Prostate gland (tissue), 2 donors: ENCODE measurements at regions of chr1 and their contacts with region 1.

Region 1: DNA sequence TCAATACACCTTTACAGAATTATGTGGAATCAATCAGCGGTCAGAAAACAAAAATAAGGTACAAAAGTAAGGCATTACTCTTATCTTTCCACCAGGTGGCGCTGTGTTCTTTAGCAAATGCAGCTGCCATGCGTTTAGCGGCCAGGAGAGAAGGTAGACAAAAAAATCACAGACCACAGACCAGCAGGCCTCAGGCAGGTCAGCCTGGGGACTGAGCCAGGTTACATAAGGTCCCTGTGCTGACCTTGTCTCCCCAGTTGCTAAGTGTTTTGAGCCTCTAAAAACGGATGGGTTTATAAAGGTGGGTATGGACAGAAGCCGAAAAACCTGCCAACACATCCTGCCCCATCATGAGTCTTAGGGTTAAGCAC is 2.8 kb downstream of the RGS16 start:
- DNase-seq: peak; percentile 63
- H3K4me3 ChIP-seq: no peak overlapping the region
- H3K27ac ChIP-seq: no peak overlapping the region
- H3K4me1 ChIP-seq: no peaks in the 10 kb centered on the region
- H3K27me3 ChIP-seq: no peaks in the 10 kb centered on the region
- CTCF ChIP-seq: peak; percentile 93 to 99 (median 94)
- POLR2A ChIP-seq: no peak

Region 2: GRCh38 chr1:182783068-182783467 is 181.7 kb after region 1 on chr1:
- intact Hi-C with region 1: loop called (anchors 1 kb)
- DNase-seq: no peak
- H3K4me3 ChIP-seq: no peak overlapping the region
- H3K27ac ChIP-seq: no peak overlapping the region
- H3K4me1 ChIP-seq: no peaks in the 10 kb centered on the region
- H3K27me3 ChIP-seq: no peaks in the 10 kb centered on the region
- CTCF ChIP-seq: no peak
- POLR2A ChIP-seq: no peak